ENCODE measurements at regions of chr2 and their contacts with region 1.

Region 1: DNA sequence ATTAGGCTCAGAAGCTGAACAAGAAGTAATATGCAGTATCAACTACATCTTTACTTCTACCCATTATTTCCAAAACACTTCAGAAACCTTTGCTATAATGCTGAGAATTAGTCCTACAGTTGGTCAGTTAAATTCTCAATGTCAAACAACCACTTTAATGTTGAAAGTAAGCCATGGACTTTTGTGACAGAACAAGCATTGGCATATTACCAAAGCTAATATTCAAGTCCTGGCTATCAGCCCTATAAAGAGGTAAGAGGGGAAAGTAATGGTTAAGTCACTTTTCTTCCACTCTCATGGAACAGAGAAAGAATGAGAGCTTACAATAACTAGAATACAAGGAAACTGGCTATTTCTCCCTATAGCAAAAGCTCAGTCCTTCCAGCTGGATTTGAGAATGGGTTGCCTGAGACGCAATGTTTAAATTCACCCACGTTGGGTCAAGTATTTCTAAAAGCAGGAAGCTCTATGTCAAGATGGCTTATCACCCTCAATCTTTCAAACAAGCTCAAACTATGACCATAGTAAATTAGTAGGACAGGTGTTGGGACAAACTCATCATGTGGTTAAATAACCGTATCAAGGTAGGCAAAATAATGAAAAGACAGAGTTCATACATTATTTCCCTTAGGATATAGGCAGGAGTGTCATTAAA is 31.4 kb upstream of the MFSD6 start:
- DNase-seq: no peak
- H3K4me3 Mint-ChIP-seq: no peak overlapping the region
- H3K27ac Mint-ChIP-seq: no peak overlapping the region
- H3K4me1 Mint-ChIP-seq: no peaks in the 10 kb centered on the region
- H3K27me3 Mint-ChIP-seq: no peaks in the 10 kb centered on the region
- CTCF ChIP-seq: no peak

Region 2: DNA sequence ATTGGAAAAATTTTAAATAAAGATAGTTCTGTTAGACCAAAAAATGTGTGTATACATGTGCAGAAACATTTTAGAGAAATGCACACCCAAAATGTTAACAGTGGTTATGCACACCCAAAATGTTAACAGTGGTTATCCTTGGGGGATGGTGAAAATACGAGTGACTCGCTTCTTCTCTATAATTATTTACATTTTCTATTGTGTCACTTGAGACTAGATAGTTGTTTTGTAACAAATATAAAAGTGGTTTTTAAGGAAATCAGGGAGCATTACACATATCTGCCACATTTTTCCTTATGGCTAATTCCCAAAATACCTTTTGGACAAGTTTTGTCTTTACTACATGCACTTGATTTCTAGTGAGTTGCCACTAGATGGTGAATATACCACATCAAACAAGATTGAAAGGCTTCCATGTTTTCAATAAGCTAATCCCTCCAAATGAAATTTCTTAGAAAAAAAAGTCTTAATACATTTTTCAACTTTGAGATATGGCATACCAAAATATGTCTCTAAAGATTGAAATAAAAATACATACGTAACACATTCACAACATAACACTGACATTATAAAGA is 48.1 kb before region 1 on chr2:
- CTCF ChIA-PET with region 1: no interaction called
- POLR2A ChIA-PET with region 1: no interaction called
- intact Hi-C with region 1: loop called (anchors 1 kb)
- DNase-seq: no peak
- H3K4me3 Mint-ChIP-seq: no peak overlapping the region
- H3K27ac Mint-ChIP-seq: no peak overlapping the region
- H3K4me1 Mint-ChIP-seq: no peaks in the 10 kb centered on the region
- H3K27me3 Mint-ChIP-seq: no peaks in the 10 kb centered on the region
- CTCF ChIP-seq: peak; percentile 15